T-cell (primary cell): ENCODE measurements at regions of chr13 and their contacts with region 1.

Region 1: DNA sequence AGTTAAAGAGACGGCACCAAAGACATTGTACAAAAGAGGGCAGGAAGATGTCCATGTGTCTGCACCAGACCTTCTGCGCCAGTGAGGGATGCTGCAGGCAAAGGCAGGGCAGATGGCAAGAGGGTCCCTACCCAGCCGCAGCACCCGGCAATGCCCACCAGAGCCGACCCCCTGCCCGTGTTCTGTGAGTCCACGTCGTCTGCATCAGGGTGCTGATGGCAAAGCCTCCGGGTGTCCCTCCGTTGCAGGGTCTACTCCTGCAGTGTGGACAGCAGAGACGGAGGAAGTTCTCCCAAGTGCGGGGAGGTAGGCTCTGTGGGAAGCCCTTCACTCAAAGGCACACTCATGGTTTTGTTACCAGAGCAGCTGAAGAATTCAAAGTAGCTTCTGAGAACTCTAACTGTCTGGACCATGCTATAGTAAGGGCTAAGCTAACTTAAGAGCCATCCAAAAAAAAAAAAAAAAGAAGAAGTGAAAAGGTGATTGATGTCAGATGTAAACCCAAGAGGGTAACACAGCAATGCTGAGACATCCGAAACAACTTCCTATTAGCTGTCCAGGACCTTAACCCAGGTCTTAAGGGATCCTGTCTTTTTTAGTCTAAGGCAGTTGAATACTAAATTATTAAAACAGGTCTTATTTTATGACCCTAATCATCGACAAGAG is 11.1 kb upstream of the RAB20 start:
- DNase-seq: no peak
- ATAC-seq: no peak
- H3K4me3 ChIP-seq: no peak overlapping the region
- H3K4me3 Mint-ChIP-seq: no peak overlapping the region
- H3K27ac ChIP-seq: no peak overlapping the region
- H3K27ac Mint-ChIP-seq: no peak overlapping the region
- H3K4me1 ChIP-seq: peaks cover 0 to 6% of the 10 kb centered on the region in 2 experiments
- H3K4me1 Mint-ChIP-seq: peaks cover 8 to 10% (median 10%) of the 10 kb centered on the region in 3 donors
- H3K27me3 ChIP-seq: peaks cover 0 to 49% of the 10 kb centered on the region in 2 experiments
- H3K27me3 Mint-ChIP-seq: peaks cover 50 to 53% of the 10 kb centered on the region in 2 donors

Region 2: GRCh38 chr13:110538632-110539031 is 34.0 kb before region 1 on chr13:
- CTCF ChIA-PET with region 1: interaction called in 1 of 2 experiments, 14 read pairs
- POLR2A ChIA-PET with region 1: no interaction called
- DNase-seq: no peak
- ATAC-seq: no peak
- H3K4me3 ChIP-seq: no peak overlapping the region
- H3K4me3 Mint-ChIP-seq: no peak overlapping the region
- H3K27ac ChIP-seq: no peak overlapping the region
- H3K27ac Mint-ChIP-seq: no peak overlapping the region
- H3K4me1 ChIP-seq: peaks cover 0 to 3% of the 10 kb centered on the region in 2 experiments
- H3K4me1 Mint-ChIP-seq: peaks cover 9 to 15% (median 10%) of the 10 kb centered on the region in 3 donors
- H3K27me3 ChIP-seq: no peaks in the 10 kb centered on the region
- H3K27me3 Mint-ChIP-seq: no peaks in the 10 kb centered on the region

Region 3: DNA sequence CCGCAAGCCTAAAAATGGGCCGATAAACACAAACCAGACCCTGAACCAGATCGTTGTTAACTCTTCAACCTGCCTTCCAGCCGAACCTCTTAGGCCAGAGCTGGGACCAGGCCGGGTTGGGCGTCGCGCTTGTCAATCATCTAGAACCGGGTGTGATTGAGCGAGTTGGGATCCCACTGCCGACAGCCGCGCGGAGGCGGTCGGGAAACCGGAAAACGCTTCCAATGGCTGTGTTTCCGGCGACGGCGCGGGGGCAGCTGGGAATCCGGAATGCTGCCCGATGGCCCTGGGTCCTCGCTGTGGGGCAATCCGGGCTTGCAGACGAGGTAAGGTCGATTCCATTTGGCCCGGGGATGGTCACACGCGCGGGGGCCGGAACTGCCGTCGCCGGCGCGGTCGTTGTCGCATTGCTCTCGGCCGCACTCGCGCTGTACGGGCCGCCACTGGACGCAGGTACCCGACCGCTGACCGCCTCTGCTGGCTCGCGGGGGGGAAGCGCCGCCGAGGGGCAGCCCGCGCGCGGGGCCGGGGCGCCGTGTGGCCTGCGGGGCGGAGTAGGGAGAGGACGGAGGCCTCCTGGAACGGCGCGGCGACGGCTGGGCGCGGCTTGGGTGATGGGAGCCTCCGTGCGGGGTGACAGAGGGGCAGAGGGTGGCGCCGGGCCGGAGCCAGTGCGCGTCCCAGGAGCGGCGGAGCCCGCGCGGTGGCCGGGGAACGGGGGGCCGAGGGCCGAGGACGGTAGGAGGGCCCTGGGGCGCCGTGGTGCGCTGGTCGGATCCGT is 42.9 kb after region 1 on chr13 and contains the start of gene NAXD:
- CTCF ChIA-PET with region 1: no interaction called
- POLR2A ChIA-PET with region 1: no interaction called
- DNase-seq: peak; percentile 47 to 87 (median 71)
- ATAC-seq: peak; percentile 82 to 91 (median 86)
- H3K4me3 ChIP-seq: peak within 1 kb of the TSS; percentile 80 to 88
- H3K4me3 Mint-ChIP-seq: peak within 1 kb of the TSS; percentile 89 to 93 (median 91)
- H3K27ac ChIP-seq: peak within 1 kb of the TSS; percentile 60
- H3K27ac Mint-ChIP-seq: peak within 1 kb of the TSS; percentile 89 to 94
- H3K4me1 ChIP-seq: peaks cover 11 to 35% of the 10 kb centered on the region in 2 experiments
- H3K4me1 Mint-ChIP-seq: peaks cover 32 to 47% (median 41%) of the 10 kb centered on the region in 3 donors
- H3K27me3 ChIP-seq: no peaks in the 10 kb centered on the region
- H3K27me3 Mint-ChIP-seq: no peaks in the 10 kb centered on the region
- total RNA-seq, gene NAXD: 22.2 to 34.3 (median 29.2) TPM

Region 4: GRCh38 chr13:110705826-110706569 is 133.4 kb after region 1 on chr13 and contains the start of gene CARS2:
- CTCF ChIA-PET with region 1: interaction called in 1 of 2 experiments, 10 read pairs
- POLR2A ChIA-PET with region 1: no interaction called
- DNase-seq: peak; percentile 77 to 97 (median 87)
- ATAC-seq: peak; percentile 88 to 95 (median 90)
- H3K4me3 ChIP-seq: peak within 1 kb of the TSS; percentile 42 to 68
- H3K4me3 Mint-ChIP-seq: peak within 1 kb of the TSS; percentile 82 to 91 (median 88)
- H3K27ac ChIP-seq: peak within 1 kb of the TSS; percentile 59
- H3K27ac Mint-ChIP-seq: peak within 1 kb of the TSS; percentile 82 to 90
- H3K4me1 ChIP-seq: peaks cover 12 to 37% of the 10 kb centered on the region in 2 experiments
- H3K4me1 Mint-ChIP-seq: peaks cover 38 to 42% (median 41%) of the 10 kb centered on the region in 3 donors
- H3K27me3 ChIP-seq: no peaks in the 10 kb centered on the region
- H3K27me3 Mint-ChIP-seq: no peaks in the 10 kb centered on the region
- total RNA-seq, gene CARS2: 74.2 to 102 (median 85.4) TPM

Region 5: DNA sequence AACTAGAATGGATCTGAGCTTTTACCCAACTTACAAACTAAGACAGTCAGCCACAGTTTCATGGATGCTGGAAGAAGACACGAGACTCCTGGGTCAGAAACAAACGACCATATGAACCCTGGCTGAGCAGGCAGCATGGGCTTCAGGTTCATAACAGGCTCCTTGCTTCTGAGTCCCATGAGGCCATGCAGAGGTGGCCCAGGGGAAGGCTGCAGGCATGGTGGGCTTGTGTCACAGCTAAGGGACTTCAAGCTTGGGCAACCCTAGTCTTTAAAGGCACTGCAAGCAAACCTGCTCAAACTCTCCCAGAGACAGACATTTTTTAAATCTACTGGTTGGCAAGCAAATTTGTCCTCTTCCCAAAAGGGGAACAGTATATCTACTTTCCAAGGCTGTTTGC is 537.5 kb after region 1 on chr13:
- CTCF ChIA-PET with region 1: no interaction called
- POLR2A ChIA-PET with region 1: no interaction called
- DNase-seq: no peak
- ATAC-seq: no peak
- H3K4me3 ChIP-seq: no peak overlapping the region
- H3K4me3 Mint-ChIP-seq: no peak overlapping the region
- H3K27ac ChIP-seq: no peak overlapping the region
- H3K27ac Mint-ChIP-seq: no peak overlapping the region
- H3K4me1 ChIP-seq: peaks cover 2 to 7% of the 10 kb centered on the region in 2 experiments
- H3K4me1 Mint-ChIP-seq: peaks cover 8 to 11% (median 9%) of the 10 kb centered on the region in 3 donors
- H3K27me3 ChIP-seq: peaks cover 21 to 38% of the 10 kb centered on the region in 2 experiments
- H3K27me3 Mint-ChIP-seq: peaks cover 69 to 71% of the 10 kb centered on the region in 2 donors